ENCODE measurements at regions of chr17 and their contacts with region 1.

Region 1: GRCh38 chr17:45135192-45135977 is at the start of gene ACBD4:
- DNase-seq: peak; percentile 98
- H3K4me3 Mint-ChIP-seq: peak within 1 kb of the TSS; percentile 79
- H3K27ac Mint-ChIP-seq: peak within 1 kb of the TSS; percentile 63
- H3K4me1 Mint-ChIP-seq: peaks cover 17% of the 10 kb centered on the region
- H3K27me3 Mint-ChIP-seq: no peaks in the 10 kb centered on the region
- CTCF ChIP-seq: peak; percentile 100
- total RNA-seq, gene ACBD4: 7.2 and 7.8 TPM in 2 replicates

Region 2: DNA sequence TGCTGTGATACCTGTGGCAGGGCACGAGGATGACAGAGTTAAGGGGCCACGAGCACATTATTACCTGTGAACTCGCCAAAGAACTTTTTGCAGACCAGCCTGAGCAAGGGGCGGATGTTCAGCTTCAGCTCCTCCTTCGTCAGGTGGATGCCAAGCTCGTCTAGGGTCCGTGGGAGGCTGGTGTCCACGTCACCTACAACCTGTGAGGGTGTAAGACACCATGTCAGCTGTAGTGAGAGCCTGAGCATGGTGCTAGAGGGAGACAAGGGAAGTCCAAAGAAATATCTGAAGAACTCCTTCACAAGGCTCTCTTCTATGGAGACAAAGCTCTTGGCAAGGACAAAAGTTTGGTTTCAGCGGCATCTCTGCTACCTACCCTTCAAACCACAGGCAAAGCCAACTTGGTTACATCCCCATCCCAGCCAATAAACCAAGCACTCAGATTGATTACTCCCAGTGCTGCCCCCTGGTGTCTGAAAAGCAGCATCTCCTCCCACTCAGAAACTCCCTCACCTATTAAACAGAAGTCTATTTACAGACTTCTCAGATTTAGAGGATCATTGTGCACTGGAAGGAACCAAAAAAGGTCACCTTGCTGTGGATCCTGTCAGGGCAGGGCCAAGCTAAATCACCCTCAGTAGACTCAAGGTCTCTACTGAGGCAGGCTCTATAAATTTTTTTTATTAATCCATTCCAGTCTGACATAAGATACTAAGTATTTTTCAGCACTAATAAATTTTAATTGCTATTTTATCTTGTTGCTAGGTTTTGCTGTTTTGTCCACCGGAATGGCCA is 270.3 kb before region 1 on chr17:
- CTCF ChIA-PET with region 1: interaction called, 3 read pairs
- POLR2A ChIA-PET with region 1: no interaction called
- intact Hi-C with region 1: loop called (anchors 1 kb)
- DNase-seq: peak; percentile 71
- H3K4me3 Mint-ChIP-seq: no peak overlapping the region
- H3K27ac Mint-ChIP-seq: no peak overlapping the region
- H3K4me1 Mint-ChIP-seq: no peaks in the 10 kb centered on the region
- H3K27me3 Mint-ChIP-seq: no peaks in the 10 kb centered on the region
- CTCF ChIP-seq: peak; percentile 82

Region 3: DNA sequence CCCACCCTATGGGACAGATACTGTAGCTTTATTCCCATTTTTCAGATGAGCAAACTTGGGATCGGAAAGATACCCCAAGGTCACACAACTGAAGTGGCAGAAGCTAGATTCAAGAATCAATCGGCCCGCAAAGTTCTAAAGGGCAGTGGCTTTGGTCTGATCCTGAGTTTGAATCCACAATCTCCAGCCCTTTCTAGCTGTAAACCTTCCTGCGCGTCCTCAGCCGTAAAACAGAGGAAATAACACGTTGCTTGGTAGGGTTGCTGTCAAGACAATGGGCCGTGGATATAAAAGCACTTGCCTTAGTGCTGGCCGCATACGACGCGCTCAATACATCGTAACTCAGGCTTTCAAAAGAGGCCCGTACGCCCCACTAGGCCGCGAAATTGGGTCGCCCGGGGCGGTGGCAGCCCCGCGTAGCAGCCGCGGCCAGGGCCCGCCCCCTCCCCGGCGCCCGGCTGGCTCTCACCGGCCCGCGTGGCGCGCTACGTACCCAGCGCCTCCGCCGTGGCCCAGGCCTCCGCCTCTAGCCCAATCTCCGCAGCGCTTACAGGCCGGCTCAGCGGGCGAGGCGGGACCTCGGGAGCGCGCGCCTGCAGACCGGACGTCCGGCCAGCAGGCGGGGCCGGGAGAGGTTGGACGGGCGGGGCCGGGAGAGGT is 84.2 kb before region 1 on chr17 and contains the start of gene DCAKD:
- CTCF ChIA-PET with region 1: interaction called, 14 read pairs
- POLR2A ChIA-PET with region 1: interaction called, 8 read pairs
- intact Hi-C with region 1: loop called (anchors 2 kb)
- DNase-seq: peak; percentile 95
- H3K4me3 Mint-ChIP-seq: peak within 1 kb of the TSS; percentile 75
- H3K27ac Mint-ChIP-seq: peak within 1 kb of the TSS; percentile 77
- H3K4me1 Mint-ChIP-seq: peaks cover 16% of the 10 kb centered on the region
- H3K27me3 Mint-ChIP-seq: no peaks in the 10 kb centered on the region
- CTCF ChIP-seq: no peak
- total RNA-seq, gene DCAKD: 23.1 and 23.3 TPM in 2 replicates

Region 4: GRCh38 chr17:45115871-45116724 is 19.3 kb before region 1 on chr17:
- CTCF ChIA-PET with region 1: interaction called, 14 read pairs
- POLR2A ChIA-PET with region 1: no interaction called
- intact Hi-C with region 1: no loop called
- DNase-seq: no peak
- H3K4me3 Mint-ChIP-seq: no peak overlapping the region
- H3K27ac Mint-ChIP-seq: no peak overlapping the region
- H3K4me1 Mint-ChIP-seq: no peaks in the 10 kb centered on the region
- H3K27me3 Mint-ChIP-seq: no peaks in the 10 kb centered on the region
- CTCF ChIP-seq: no peak

Region 5: DNA sequence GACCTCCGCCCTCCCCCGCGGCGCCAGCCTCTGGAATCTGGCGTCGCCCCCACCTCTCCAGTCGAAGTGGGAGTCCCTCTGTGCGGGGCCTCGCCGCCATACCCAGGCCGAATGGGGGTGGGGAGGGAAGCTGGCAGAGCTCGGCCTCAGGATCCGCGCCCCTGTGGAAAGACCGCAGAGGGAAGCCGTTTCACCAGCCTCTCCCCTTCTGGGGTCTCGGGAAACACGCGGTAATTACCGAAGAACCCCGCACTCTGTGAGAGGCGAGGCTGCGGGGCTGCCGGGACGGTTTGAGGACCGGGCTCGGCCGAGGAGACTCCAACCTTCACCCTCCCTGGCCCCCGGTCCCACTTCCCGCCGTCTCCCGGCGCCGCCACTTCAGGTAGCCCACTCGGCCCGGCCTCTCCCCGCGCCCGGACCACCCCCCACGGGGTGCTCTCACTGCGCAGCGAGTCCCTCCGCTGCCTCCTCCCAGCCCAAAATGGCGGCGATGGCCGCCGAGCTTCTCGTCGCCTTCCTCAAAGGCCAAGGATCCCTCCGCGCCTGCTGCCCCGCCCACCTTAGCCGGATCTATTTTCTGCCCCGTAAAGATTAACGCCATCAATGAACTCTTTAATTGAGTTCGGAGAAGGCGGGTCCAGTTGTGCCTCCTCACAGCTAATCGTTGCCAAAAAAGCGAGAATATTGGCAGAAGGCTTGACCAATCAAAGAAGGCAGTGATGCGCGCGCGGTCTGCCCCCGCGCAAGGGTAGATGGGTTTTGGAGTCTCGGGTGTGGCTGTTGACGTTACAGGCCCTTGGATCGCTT is 25.8 kb after region 1 on chr17:
- CTCF ChIA-PET with region 1: interaction called, 16 read pairs
- POLR2A ChIA-PET with region 1: interaction called, 27 read pairs
- intact Hi-C with region 1: no loop called
- DNase-seq: peak; percentile 100
- H3K4me3 Mint-ChIP-seq: peak overlapping the region; percentile 98
- H3K27ac Mint-ChIP-seq: peak overlapping the region; percentile 99
- H3K4me1 Mint-ChIP-seq: peaks cover 18% of the 10 kb centered on the region
- H3K27me3 Mint-ChIP-seq: no peaks in the 10 kb centered on the region
- CTCF ChIP-seq: no peak

Region 6: GRCh38 chr17:45218895-45219661 is 83.7 kb after region 1 on chr17:
- CTCF ChIA-PET with region 1: interaction called, 19 read pairs
- POLR2A ChIA-PET with region 1: interaction called, 4 read pairs
- intact Hi-C with region 1: no loop called
- DNase-seq: peak; percentile 86
- H3K4me3 Mint-ChIP-seq: no peak overlapping the region
- H3K27ac Mint-ChIP-seq: no peak overlapping the region
- H3K4me1 Mint-ChIP-seq: peaks cover 11% of the 10 kb centered on the region
- H3K27me3 Mint-ChIP-seq: no peaks in the 10 kb centered on the region
- CTCF ChIP-seq: peak; percentile 95

Region 7: DNA sequence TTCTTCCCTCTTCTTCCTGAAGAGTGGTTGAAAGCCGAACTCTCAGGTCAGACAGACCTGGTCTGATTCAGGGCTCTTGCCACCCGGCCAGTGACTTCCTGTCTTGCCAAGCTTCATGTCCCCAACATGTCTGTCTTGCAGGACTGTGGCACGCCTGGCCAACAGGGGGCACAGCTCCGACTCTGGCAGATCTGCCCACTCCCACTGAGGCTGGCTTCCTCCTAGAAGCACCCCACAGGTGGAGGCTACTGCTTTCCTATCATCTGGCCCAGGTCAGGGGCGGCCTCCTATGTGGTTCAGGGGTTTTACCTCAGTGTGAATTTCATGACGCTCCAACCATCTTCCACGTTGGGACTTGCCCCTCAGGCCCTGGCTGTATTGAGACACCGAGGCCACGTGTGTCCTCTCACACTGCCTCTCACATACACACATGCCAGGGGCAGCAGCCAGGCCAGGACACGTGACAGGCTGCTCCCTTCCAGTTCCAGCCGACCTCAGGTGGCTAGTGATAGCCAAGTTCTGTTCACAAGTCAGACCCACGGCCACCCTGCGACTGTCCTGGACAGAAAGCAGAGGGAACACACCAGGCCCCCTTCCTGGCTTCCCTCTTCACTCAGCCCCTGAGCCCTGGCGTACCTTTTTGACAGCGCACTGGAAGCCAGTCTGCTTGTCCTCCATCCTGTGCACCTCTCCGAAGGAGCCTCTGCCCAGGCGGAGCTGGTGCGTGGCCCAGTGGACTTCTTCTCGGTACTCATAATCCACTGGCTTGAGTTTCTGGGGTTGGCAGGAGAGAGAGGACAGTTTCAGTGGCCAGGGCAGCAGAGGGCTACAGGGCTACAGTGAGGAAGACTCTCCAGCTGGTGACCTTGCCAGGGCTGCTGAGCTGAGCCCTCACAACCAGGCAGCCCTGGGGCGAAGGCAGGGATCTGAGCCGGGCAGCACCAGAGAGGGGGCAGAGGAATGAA is 149.1 kb after region 1 on chr17:
- CTCF ChIA-PET with region 1: no interaction called
- POLR2A ChIA-PET with region 1: no interaction called
- intact Hi-C with region 1: no loop called
- DNase-seq: no peak
- H3K4me3 Mint-ChIP-seq: no peak overlapping the region
- H3K27ac Mint-ChIP-seq: peak overlapping the region; percentile 69
- H3K4me1 Mint-ChIP-seq: no peaks in the 10 kb centered on the region
- H3K27me3 Mint-ChIP-seq: no peaks in the 10 kb centered on the region
- CTCF ChIP-seq: no peak

Region 8: GRCh38 chr17:45332989-45333701 is 197.8 kb after region 1 on chr17:
- CTCF ChIA-PET with region 1: no interaction called
- POLR2A ChIA-PET with region 1: no interaction called
- intact Hi-C with region 1: no loop called
- DNase-seq: no peak
- H3K4me3 Mint-ChIP-seq: no peak overlapping the region
- H3K27ac Mint-ChIP-seq: no peak overlapping the region
- H3K4me1 Mint-ChIP-seq: peaks cover 7% of the 10 kb centered on the region
- H3K27me3 Mint-ChIP-seq: no peaks in the 10 kb centered on the region
- CTCF ChIP-seq: no peak

Region 9: DNA sequence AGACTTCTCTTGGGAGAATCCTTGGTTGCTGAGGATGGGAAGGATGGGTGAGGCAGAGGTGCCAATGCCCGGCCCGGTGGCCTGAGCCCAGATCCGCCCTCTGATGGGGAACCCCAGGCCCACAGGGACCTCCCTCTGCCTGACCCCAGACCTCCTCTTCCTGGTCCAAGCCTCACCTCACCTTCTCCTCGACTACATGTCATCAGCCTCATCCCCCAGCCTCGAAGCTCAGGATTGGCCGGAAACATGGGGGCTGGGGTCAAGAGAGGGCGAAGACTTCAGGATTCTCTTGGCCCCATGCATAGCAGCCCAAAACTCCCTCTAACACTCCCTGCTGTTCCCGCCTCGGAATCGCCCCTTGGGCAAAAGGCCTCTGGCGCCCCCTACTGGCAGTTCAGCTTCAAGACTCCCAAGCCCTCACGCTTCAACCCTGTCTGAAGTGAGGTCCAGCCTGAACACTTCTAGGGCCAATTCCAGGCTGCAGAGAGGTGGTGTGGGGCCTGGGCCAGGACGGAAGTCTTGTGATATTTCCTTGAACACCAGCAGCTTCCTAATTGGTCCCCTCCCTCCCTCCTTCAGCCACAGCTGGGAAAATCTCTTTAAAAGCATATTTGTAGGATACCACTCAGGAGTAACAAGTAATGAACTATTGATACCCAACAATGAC is 250.1 kb after region 1 on chr17:
- CTCF ChIA-PET with region 1: interaction called, 3 read pairs
- POLR2A ChIA-PET with region 1: no interaction called
- intact Hi-C with region 1: loop called (anchors 1 kb)
- DNase-seq: peak; percentile 87
- H3K4me3 Mint-ChIP-seq: no peak overlapping the region
- H3K27ac Mint-ChIP-seq: no peak overlapping the region
- H3K4me1 Mint-ChIP-seq: peaks cover 5% of the 10 kb centered on the region
- H3K27me3 Mint-ChIP-seq: no peaks in the 10 kb centered on the region
- CTCF ChIP-seq: peak; percentile 94

Measured in MCF 10A (cell line).